Mammary epithelial cell (primary cell): ENCODE measurements at regions of chr10 and their contacts with region 1.

Region 1: GRCh38 chr10:23818484-23818883 is 379.6 kb downstream of the OTUD1 start:
- DNase-seq: no peak
- H3K4me3 ChIP-seq: no peak overlapping the region
- H3K27ac ChIP-seq: no peak overlapping the region
- H3K4me1 ChIP-seq: no peaks in the 10 kb centered on the region
- H3K27me3 ChIP-seq: peaks cover 2% of the 10 kb centered on the region
- CTCF ChIP-seq: no peak

Region 2: DNA sequence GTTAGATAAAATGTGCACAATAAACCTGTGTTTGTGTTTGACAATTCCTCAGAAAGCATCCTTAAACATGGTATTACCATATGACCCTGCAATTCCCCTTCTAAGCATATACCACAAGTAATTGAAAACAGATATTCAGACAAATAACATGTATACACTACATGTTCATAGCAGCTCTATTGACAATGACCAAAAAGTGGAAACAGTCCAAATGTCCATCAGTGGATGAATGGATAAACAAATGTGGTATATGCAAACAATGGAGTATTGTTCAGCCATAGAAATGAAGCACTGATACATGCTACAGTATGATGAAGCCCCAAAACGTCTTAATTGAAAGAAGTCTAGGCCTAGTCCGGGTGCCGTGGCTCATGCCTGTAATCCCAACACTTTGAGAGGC is 99.5 kb before region 1 on chr10:
- CTCF ChIA-PET with region 1: no interaction called
- dilution Hi-C with region 1: loop called (anchors 5 kb)
- in situ Hi-C with region 1: no loop called
- intact Hi-C with region 1: no loop called
- DNase-seq: no peak
- H3K4me3 ChIP-seq: no peak overlapping the region
- H3K27ac ChIP-seq: no peak overlapping the region
- H3K4me1 ChIP-seq: no peaks in the 10 kb centered on the region
- H3K27me3 ChIP-seq: no peaks in the 10 kb centered on the region
- CTCF ChIP-seq: no peak

Region 3: DNA sequence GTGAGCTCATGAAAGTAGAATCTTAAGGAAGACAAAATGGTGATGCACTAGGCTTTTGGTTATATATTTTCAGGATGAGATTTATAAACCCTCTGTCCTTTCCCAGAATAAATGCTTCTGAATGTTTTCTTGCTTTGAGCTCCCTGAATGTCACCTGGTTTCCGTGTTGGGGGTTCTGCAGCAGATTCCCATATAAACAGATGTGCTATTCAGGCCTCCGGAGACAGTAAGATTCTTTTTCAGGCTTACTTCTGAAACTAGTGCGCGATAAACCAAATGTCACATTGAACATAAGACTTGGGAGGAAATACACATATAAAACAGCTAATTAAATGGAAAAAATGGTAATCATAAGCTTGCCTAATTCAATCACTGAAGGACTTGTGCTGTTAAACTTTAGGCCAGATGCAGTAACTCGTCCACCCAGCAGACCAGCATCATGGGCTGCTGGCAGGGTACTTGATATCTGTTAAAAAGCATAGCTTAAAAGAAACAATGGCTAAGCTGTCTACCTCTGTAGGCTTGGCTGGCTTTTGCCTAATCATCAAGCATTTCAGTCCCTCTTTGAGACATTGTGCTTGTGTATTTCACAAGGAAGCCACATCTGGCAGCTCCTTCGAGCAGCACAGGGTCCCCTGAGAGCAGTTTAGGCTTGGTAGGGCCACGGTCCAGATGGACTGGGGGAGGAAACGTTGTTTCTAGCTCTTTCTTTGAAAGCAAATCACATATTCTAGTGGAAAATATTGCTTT is 109.3 kb after region 1 on chr10:
- CTCF ChIA-PET with region 1: no interaction called
- dilution Hi-C with region 1: loop called (anchors 10 kb)
- in situ Hi-C with region 1: no loop called
- intact Hi-C with region 1: no loop called
- DNase-seq: no peak
- H3K4me3 ChIP-seq: no peak overlapping the region
- H3K27ac ChIP-seq: no peak overlapping the region
- H3K4me1 ChIP-seq: no peaks in the 10 kb centered on the region
- H3K27me3 ChIP-seq: no peaks in the 10 kb centered on the region
- CTCF ChIP-seq: no peak

Region 4: GRCh38 chr10:24344279-24344678 is 525.8 kb after region 1 on chr10:
- CTCF ChIA-PET with region 1: no interaction called
- dilution Hi-C with region 1: no loop called
- in situ Hi-C with region 1: no loop called
- intact Hi-C with region 1: no loop called
- DNase-seq: peak; percentile 93
- H3K4me3 ChIP-seq: peak overlapping the region in 2 of 3 experiments; percentile 9 to 26
- H3K27ac ChIP-seq: peak overlapping the region; percentile 96
- H3K4me1 ChIP-seq: peaks cover 39% of the 10 kb centered on the region
- H3K27me3 ChIP-seq: no peaks in the 10 kb centered on the region
- CTCF ChIP-seq: no peak

Region 5: DNA sequence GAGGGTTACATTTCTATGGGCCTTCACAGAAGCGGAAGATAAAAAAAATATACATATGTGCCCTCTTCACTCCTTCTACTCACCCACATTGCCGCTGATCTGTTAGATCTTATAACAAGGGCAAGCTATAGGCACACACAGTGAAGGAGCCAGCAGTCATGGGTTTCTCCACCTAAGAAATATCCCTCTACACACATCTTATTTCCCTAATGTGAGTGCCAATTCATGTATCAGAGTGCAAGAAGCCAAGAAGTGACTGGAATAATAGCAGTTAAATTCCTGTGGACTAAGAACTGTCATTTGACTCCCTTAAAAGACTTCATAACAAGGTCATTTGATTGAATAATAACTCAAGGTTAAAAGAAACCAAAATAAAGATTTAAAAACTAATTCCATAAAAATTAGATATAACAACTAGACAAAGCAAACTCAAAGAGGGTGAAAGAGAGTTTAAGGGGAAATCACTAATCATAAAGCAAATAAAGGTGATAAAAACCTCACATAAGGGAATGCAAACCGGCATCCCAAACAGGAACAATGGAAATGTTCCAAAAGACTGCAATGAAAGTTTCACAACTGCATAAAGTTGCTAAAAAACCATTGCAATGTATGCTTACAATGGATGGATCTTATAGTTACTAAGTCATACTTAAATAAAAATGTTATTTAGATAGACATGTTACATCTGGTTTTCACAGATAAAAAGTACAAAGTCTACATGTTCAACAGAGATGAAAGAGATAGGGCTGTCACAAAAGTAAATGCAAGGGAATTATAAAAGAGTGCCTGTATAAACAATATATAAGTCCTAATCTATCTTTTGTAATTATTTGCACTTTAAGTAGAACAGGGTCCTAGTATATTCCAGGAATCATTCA is 862.4 kb after region 1 on chr10:
- CTCF ChIA-PET with region 1: no interaction called
- dilution Hi-C with region 1: no loop called
- in situ Hi-C with region 1: no loop called
- intact Hi-C with region 1: no loop called
- DNase-seq: no peak
- H3K4me3 ChIP-seq: no peak overlapping the region
- H3K27ac ChIP-seq: peak overlapping the region; percentile 7
- H3K4me1 ChIP-seq: no peaks in the 10 kb centered on the region
- H3K27me3 ChIP-seq: no peaks in the 10 kb centered on the region
- CTCF ChIP-seq: no peak